ENCODE measurements at regions of chr13 and their contacts with region 1.

Region 1: DNA sequence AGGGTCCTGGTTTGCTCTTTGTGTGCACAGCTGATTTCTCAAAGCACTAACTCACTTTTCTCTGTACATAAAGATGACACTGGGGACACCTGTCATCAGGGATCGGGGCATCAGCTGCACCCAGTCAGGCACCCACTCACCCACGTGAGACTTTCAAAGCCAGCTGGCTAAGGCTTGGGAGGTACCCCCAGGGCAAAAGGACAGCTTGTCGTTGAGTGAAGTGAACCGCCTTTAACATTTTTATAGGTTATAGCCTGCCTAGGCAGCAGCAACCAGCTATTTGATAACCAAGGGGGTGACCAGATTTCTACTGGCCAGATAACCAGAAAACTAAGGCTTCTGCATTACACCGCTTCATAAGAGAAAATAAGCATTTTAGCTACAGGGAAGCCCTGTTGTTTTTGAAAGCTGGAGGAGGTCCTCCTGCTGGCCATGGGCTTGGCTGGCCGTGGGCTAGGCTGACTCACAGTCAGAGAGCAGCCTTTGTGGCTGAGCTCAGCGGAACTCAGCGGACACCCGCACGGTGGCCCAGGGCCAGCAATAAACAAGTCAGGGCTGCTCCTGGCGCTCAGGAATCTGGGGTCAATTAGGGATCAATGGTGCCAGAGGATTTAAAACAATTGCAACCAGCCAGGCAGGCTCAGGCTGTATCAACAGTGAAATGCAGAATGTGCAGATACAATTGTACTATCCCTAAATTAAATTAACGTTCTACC is 57.1 kb downstream of the ALOX5AP start:
- DNase-seq: peak; percentile 75 to 90 (median 81)
- H3K4me3 ChIP-seq: no peak overlapping the region
- H3K27ac ChIP-seq: no peak overlapping the region
- H3K4me1 ChIP-seq: peaks cover 2% of the 10 kb centered on the region
- H3K27me3 ChIP-seq: no peaks in the 10 kb centered on the region
- CTCF ChIP-seq: peak in 2 of 3 donors; percentile 35 to 48
- EP300 ChIP-seq: no peak
- POLR2A ChIP-seq: no peak

Region 2: GRCh38 chr13:29743201-29743786 is 1049.1 kb before region 1 on chr13:
- intact Hi-C with region 1: no loop called
- DNase-seq: peak in 1 of 5 donors; percentile 16
- H3K4me3 ChIP-seq: no peak overlapping the region
- H3K27ac ChIP-seq: no peak overlapping the region
- H3K4me1 ChIP-seq: no peaks in the 10 kb centered on the region
- H3K27me3 ChIP-seq: no peaks in the 10 kb centered on the region
- CTCF ChIP-seq: no peak
- EP300 ChIP-seq: no peak
- POLR2A ChIP-seq: no peak

Region 3: GRCh38 chr13:30138511-30138910 is 653.9 kb before region 1 on chr13:
- intact Hi-C with region 1: loop called in 2 of 4 experiments (anchors 5 kb)
- DNase-seq: no peak
- H3K4me3 ChIP-seq: no peak overlapping the region
- H3K27ac ChIP-seq: no peak overlapping the region
- H3K4me1 ChIP-seq: peaks cover 6% of the 10 kb centered on the region
- H3K27me3 ChIP-seq: no peaks in the 10 kb centered on the region
- CTCF ChIP-seq: no peak
- EP300 ChIP-seq: no peak
- POLR2A ChIP-seq: no peak

Region 4: DNA sequence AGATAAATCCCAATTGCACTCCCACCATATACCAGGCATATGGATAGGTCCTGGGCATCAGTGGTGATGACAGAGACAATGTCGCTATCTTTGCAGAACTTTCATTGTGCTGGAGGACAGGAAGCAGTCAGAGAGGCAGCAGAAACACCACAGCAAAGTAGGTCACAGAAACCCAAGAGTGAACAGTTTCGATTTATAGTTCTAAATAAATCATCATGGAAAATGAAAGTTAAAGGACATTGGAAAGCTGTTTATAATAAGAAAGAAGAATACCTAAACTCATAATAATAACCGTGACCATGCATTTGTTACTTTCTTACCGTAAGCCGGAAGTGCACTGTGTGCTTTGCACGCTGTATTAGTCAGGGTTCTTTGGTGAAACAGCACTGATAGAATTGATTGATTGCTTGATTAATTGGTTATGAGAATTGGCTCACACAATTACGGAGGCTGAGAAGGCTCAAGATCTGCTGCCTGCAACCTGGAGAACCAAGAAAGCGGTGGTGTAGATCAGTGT is 18.2 kb before region 1 on chr13:
- intact Hi-C with region 1: no loop called
- DNase-seq: no peak
- H3K4me3 ChIP-seq: no peak overlapping the region
- H3K27ac ChIP-seq: no peak overlapping the region
- H3K4me1 ChIP-seq: no peaks in the 10 kb centered on the region
- H3K27me3 ChIP-seq: no peaks in the 10 kb centered on the region
- CTCF ChIP-seq: no peak
- EP300 ChIP-seq: no peak
- POLR2A ChIP-seq: no peak

Region 5: DNA sequence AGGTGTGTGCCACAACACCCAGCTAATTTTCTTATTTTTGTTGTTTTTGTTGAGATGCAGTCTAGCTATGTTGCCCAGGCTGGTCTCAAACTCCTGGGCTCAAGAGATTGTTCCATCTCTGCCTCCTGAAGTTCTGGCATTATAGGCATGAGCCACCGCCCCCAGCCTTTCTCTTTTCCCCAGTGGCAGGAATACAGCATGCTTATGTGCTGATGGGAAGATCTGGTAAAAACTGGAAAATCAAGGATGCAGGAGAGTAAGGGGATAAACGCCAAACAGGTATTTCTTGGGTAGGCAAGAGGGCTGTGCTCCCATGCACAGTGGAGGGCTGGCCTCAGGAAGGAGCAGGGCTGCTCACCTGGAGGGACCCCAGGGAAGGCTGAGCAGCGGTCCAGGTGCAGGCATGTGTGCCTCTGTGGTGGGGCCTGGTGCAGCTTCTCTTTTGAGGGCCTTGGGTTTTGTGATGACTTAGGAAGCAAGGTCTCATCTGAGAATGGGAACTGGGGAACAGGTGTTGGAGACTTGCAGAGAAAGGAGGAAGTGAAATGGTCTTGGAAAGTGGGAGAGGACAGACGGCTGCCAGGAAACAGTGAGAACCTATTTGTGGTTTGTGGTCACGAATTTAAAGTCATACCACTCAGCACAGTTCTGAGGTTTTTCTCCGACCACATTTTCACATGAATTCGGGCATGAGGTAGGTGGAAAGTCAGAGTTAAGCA is 246.6 kb after region 1 on chr13:
- intact Hi-C with region 1: loop called in 1 of 4 experiments (anchors 10 kb)
- DNase-seq: no peak
- H3K4me3 ChIP-seq: no peak overlapping the region
- H3K27ac ChIP-seq: no peak overlapping the region
- H3K4me1 ChIP-seq: no peaks in the 10 kb centered on the region
- H3K27me3 ChIP-seq: no peaks in the 10 kb centered on the region
- CTCF ChIP-seq: no peak
- EP300 ChIP-seq: no peak
- POLR2A ChIP-seq: no peak

Region 6: GRCh38 chr13:31409678-31410356 is 617.4 kb after region 1 on chr13:
- intact Hi-C with region 1: no loop called
- DNase-seq: no peak
- H3K4me3 ChIP-seq: no peak overlapping the region
- H3K27ac ChIP-seq: no peak overlapping the region
- H3K4me1 ChIP-seq: no peaks in the 10 kb centered on the region
- H3K27me3 ChIP-seq: no peaks in the 10 kb centered on the region
- CTCF ChIP-seq: no peak
- EP300 ChIP-seq: no peak
- POLR2A ChIP-seq: no peak

Measured in ovary (tissue), 10 donors.